Activated T-helper 2 cell treated with anti-CD3 and anti-CD28 coated beads, Interferon-gamma antibody, Interleukin-2, Interleukin-4, amounts not matched to agents 10 μg/mL and 5 μg/mL and 100 μg/mL, durations not matched to agents 14 hours and 24 hours and 36 hours (primary cell): ENCODE measurements at regions of chr5 and their contacts with region 1.

Region 1: GRCh38 chr5:151080623-151081430 is at the start of gene TNIP1:
- DNase-seq: peak; percentile 93
- H3K4me3 Mint-ChIP-seq: peak within 1 kb of the TSS; percentile 99
- H3K27ac Mint-ChIP-seq: peak within 1 kb of the TSS; percentile 87
- H3K4me1 Mint-ChIP-seq: peaks cover 76% of the 10 kb centered on the region
- H3K27me3 Mint-ChIP-seq: no peaks in the 10 kb centered on the region
- total RNA-seq, gene TNIP1: 473 and 477 TPM in 2 replicates

Region 2: GRCh38 chr5:151068433-151069197 is 12.2 kb before region 1 on chr5:
- intact Hi-C with region 1: loop called (anchors 1 kb)
- DNase-seq: no peak
- H3K4me3 Mint-ChIP-seq: peak overlapping the region; percentile 57
- H3K27ac Mint-ChIP-seq: peak overlapping the region; percentile 89
- H3K4me1 Mint-ChIP-seq: peaks cover 87% of the 10 kb centered on the region
- H3K27me3 Mint-ChIP-seq: no peaks in the 10 kb centered on the region

Region 3: GRCh38 chr5:151093476-151093889 is 12.7 kb after region 1 on chr5:
- intact Hi-C with region 1: loop called (anchors 1 kb)
- DNase-seq: no peak
- H3K4me3 Mint-ChIP-seq: peak overlapping the region; percentile 71
- H3K27ac Mint-ChIP-seq: peak overlapping the region; percentile 94
- H3K4me1 Mint-ChIP-seq: peaks cover 67% of the 10 kb centered on the region
- H3K27me3 Mint-ChIP-seq: no peaks in the 10 kb centered on the region

Region 4: DNA sequence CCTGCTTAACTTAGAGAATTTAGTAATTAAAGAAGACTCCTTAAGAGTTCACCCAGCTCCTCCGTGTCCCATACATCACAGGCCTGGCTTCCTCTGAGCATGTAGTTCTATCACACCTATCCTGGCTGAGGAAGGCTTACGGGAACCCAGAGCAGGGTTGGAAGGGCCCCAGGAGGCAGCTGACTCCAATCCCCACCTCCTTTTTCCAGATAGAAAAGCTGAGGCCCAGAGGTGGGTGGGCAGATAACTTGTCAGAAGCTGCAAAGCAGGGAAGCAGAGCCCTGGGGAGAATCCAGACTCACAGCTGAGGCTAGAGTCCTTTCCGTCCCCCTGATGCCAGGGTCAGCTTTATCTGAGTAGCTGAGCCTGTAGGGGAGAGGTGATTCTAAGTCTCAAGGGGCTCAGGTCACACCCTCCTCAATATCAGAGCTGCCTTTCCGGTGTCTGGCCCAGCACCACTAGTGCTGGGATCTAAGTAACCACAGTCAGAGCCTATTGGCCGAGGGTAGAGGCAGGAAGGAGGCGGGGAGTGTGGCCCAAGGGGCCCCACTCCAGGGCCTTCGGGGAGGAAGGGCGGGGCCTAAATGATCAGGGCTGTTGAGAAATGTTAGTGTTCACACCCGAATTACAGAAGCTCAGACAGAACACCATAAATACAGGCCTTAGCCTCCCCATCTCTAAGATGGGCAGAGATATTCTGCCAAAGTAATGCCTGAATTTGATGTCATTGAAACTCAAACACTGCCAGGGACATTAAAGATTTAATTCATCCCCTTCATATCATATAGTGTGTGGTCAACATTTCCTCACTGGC is 133.2 kb after region 1 on chr5:
- intact Hi-C with region 1: loop called (anchors 5 kb)
- DNase-seq: peak; percentile 84
- H3K4me3 Mint-ChIP-seq: peak overlapping the region; percentile 79
- H3K27ac Mint-ChIP-seq: peak overlapping the region; percentile 97
- H3K4me1 Mint-ChIP-seq: peaks cover 75% of the 10 kb centered on the region
- H3K27me3 Mint-ChIP-seq: no peaks in the 10 kb centered on the region